Naive thymus-derived CD4-positive, alpha-beta T cell (primary cell): ENCODE measurements at regions of chr22 and their contacts with region 1.

Region 1: GRCh38 chr22:49767355-49768062 is 60.2 kb downstream of the BRD1 start:
- DNase-seq: peak in 8 of 9 donors; percentile 11 to 58 (median 46)
- ATAC-seq: peak; percentile 67
- H3K4me3 ChIP-seq: no peak overlapping the region
- H3K4me3 Mint-ChIP-seq: no peak overlapping the region
- H3K27ac ChIP-seq: no peak overlapping the region
- H3K27ac Mint-ChIP-seq: peak overlapping the region in 8 of 9 donors; percentile 3 to 74 (median 32)
- H3K4me1 ChIP-seq: no peaks in the 10 kb centered on the region
- H3K4me1 Mint-ChIP-seq: peaks cover 0 to 18% (median 6%) of the 10 kb centered on the region in 7 donors
- H3K27me3 ChIP-seq: no peaks in the 10 kb centered on the region
- H3K27me3 Mint-ChIP-seq: no peaks in the 10 kb centered on the region

Region 2: DNA sequence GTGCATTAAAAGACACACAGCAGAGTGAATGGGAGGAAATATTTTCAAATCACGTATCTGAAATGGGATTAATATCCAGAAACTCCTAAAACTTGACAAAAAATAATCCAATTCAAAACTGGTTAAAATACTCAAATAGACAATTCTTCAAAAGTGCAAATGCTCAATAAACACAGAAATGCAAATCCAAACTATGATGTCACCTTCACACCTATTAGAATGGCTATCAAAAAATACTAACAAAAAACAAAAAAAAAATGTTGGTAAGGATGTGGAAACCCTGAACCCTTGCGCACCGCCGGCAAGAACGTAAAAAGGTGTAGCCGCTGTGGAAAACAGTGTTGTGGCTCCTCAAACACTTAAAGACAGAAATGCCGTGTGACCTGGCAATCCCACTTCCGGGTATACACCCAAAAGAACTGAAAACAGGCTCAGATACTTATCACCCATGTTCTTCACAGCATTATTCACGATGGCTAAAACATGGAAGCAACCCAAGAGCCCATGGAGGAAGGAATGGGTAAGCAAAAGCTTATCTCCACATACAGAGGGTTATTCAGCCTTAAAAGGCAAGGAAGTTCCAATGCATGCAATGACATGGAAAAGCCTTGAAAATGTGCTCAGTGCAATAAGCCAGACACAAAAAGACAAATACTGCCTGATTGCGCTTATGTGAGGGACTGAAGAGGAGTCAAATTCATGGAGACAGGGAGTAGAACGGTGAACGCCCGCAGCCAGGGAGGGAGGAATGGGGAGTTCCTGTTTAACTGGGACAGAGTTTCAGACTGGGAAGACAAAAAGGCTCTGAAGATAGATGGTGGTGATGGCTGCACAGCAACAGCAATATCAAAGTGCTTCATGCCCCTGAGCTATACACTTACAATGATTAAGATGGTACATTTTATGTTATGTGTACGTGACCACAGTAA is 40.5 kb after region 1 on chr22:
- CTCF ChIA-PET with region 1: no interaction called
- POLR2A ChIA-PET with region 1: no interaction called
- intact Hi-C with region 1: loop called in 1 of 2 experiments (anchors 5 kb)
- DNase-seq: peak in 7 of 9 donors; percentile 64 to 85 (median 78)
- ATAC-seq: peak; percentile 76
- H3K4me3 ChIP-seq: no peak overlapping the region
- H3K4me3 Mint-ChIP-seq: peak overlapping the region; percentile 61 to 81 (median 68)
- H3K27ac ChIP-seq: peak overlapping the region; percentile 43
- H3K27ac Mint-ChIP-seq: peak overlapping the region; percentile 78 to 98 (median 91)
- H3K4me1 ChIP-seq: peaks cover 24 to 55% of the 10 kb centered on the region in 2 donors
- H3K4me1 Mint-ChIP-seq: peaks cover 58 to 91% (median 76%) of the 10 kb centered on the region in 7 donors
- H3K27me3 ChIP-seq: no peaks in the 10 kb centered on the region
- H3K27me3 Mint-ChIP-seq: no peaks in the 10 kb centered on the region

Region 3: DNA sequence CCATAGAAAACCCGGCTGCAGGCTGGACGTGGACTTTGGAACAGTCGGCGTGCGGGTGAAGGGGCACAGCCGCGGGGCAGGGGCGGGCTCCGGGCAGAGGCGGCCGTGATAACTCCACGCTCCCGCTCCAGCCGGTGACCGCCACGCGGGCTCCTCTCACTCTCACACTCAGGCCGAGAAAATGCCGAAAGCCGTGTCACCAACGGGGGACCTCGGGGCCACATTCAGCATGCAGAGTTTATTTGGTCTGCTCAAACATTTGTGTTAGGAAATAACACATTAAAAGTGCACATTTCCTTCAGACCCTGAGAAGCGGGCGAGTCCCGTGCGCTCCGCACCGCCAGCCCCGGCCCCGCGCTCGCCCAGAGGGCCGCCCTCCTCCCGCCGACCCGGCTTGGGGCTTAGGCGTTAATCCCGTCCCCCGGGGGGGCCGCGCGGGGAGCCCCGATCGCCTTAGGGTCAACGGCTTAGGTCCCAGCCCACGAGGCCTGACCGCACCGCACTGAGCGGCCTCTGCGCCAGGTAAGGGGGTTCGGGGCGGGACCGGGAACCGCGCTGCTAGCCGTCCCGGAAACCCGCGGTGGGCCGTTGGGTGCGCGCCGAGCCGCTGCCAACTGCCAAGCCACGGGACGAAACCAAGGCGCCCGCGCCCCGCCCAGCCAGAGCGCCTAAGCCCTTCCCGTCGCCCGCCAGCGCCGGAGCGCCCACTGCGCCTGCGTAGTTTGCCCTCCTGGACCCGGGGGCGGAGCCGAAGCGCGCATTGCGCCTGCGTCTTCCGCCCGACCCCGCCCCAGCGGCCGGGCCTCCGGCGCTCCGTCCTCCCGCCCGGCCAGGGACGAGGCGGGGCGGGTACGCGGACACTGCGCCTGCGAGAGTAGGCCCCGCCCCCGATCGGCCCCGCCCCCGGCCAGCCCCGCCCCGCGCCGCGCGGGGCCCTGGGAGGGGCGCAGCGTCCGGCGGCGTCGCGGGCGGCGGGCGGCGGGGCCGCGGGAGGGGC is 85.7 kb after region 1 on chr22 and contains the start of gene ZBED4:
- CTCF ChIA-PET with region 1: no interaction called
- POLR2A ChIA-PET with region 1: interaction called, 3 read pairs
- intact Hi-C with region 1: loop called in 1 of 2 experiments (anchors 2 kb)
- DNase-seq: peak; percentile 90 to 100 (median 98)
- ATAC-seq: peak; percentile 95
- H3K4me3 ChIP-seq: peak within 1 kb of the TSS; percentile 68
- H3K4me3 Mint-ChIP-seq: peak within 1 kb of the TSS; percentile 90 to 99 (median 96)
- H3K27ac ChIP-seq: peak within 1 kb of the TSS; percentile 90
- H3K27ac Mint-ChIP-seq: peak within 1 kb of the TSS; percentile 86 to 97 (median 93)
- H3K4me1 ChIP-seq: peaks cover 14 to 31% of the 10 kb centered on the region in 2 donors
- H3K4me1 Mint-ChIP-seq: peaks cover 30 to 62% (median 45%) of the 10 kb centered on the region in 7 donors
- H3K27me3 ChIP-seq: no peaks in the 10 kb centered on the region
- H3K27me3 Mint-ChIP-seq: peaks cover 0 to 17% (median 0%) of the 10 kb centered on the region in 5 donors
- total RNA-seq, gene ZBED4: 13.6 to 20.1 (median 17.1) TPM

Region 4: DNA sequence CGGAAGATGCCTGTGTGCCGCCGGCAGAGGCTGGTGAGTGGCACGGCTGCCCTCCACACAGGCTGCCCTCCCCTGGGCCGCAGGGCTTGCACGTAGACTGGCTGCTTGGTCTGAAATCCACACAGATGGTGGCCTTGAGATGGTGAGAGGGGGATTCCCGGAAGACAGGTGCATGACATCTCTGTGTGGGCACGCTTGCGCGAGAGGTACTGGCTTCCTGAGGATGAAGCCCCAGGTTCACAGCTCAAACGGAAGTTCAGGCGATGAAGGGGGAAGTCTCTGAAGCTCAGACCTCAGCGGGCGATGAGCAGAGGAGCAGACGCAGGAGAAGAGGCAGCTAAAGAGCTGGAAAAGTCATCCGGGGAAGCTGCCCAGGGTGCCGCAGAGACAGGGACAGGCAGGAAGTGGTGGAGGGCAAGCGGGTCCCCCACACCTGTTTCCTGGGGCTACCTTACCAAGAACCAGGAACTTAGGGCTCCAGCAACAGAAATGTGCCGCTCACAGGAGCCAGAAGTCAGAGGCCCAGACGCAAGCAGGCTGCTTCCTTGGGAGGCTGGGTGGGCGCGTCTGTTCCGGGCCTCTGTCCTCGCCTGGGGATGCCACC is 158.1 kb after region 1 on chr22:
- CTCF ChIA-PET with region 1: interaction called, 9 read pairs
- POLR2A ChIA-PET with region 1: interaction called, 4 read pairs
- intact Hi-C with region 1: loop called (anchors 1 kb)
- DNase-seq: peak; percentile 55 to 89 (median 77)
- ATAC-seq: peak; percentile 90
- H3K4me3 ChIP-seq: peak overlapping the region; percentile 56
- H3K4me3 Mint-ChIP-seq: peak overlapping the region; percentile 77 to 90 (median 84)
- H3K27ac ChIP-seq: peak overlapping the region; percentile 90
- H3K27ac Mint-ChIP-seq: peak overlapping the region; percentile 92 to 98 (median 97)
- H3K4me1 ChIP-seq: peaks cover 14 to 26% of the 10 kb centered on the region in 2 donors
- H3K4me1 Mint-ChIP-seq: peaks cover 21 to 38% (median 32%) of the 10 kb centered on the region in 7 donors
- H3K27me3 ChIP-seq: no peaks in the 10 kb centered on the region
- H3K27me3 Mint-ChIP-seq: no peaks in the 10 kb centered on the region

Region 5: DNA sequence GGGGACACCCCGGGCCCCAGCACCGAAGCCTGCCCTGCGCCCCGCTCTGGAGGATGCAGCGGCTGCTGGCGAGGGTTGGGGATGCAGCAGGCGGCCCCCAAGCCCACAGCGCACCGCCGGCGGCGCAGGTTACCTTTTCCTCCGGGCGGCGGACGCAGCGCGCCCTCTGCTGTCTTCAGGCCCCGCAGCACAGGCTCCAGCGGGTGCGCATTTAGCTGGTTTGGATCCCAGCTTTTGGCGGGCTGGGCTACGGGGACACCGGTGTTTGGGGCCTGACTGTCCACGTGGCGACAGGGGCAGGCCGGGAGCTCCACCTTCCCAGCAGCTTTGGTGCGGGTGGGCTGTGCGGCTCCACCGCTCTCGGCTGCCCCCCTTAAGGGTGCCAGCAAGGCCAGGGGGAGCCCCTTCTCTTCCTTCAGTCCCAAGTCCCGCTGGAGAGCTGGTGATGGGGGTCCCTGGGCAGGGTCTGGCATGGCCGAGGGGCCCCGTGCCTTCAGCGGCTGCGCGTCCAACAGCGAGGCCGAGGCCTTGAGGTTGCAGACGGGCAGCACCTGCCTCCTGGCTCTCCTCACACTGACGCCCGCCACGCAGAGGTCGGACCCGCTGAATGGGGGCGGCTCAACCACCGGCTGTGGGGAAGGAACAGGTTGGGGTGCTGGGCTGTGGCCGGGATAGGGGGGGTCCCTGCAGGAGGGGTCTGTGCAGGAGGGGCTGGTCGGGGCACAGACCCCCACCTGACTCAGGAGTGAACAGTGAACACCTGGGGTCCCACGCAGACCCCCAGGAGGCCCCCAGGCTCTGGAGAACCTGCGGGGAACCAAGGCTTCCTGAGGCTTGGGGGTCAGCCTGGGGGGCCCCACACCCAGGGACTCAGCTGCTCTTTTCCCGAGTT is 263.0 kb after region 1 on chr22:
- CTCF ChIA-PET with region 1: interaction called, 13 read pairs
- POLR2A ChIA-PET with region 1: no interaction called
- intact Hi-C with region 1: loop called (anchors 1 kb)
- DNase-seq: peak; percentile 65 to 84 (median 80)
- ATAC-seq: peak; percentile 95
- H3K4me3 ChIP-seq: no peak overlapping the region
- H3K4me3 Mint-ChIP-seq: peak overlapping the region in 1 of 10 donors; percentile 34
- H3K27ac ChIP-seq: no peak overlapping the region
- H3K27ac Mint-ChIP-seq: no peak overlapping the region
- H3K4me1 ChIP-seq: peaks cover 2 to 9% of the 10 kb centered on the region in 2 donors
- H3K4me1 Mint-ChIP-seq: peaks cover 0 to 12% (median 5%) of the 10 kb centered on the region in 7 donors
- H3K27me3 ChIP-seq: no peaks in the 10 kb centered on the region
- H3K27me3 Mint-ChIP-seq: peaks cover 0 to 27% (median 6%) of the 10 kb centered on the region in 5 donors

Region 6: GRCh38 chr22:50044485-50045118 is 277.1 kb after region 1 on chr22:
- CTCF ChIA-PET with region 1: no interaction called
- POLR2A ChIA-PET with region 1: no interaction called
- intact Hi-C with region 1: no loop called
- DNase-seq: no peak
- ATAC-seq: no peak
- H3K4me3 ChIP-seq: no peak overlapping the region
- H3K4me3 Mint-ChIP-seq: no peak overlapping the region
- H3K27ac ChIP-seq: no peak overlapping the region
- H3K27ac Mint-ChIP-seq: no peak overlapping the region
- H3K4me1 ChIP-seq: no peaks in the 10 kb centered on the region
- H3K4me1 Mint-ChIP-seq: peaks cover 0 to 16% (median 11%) of the 10 kb centered on the region in 7 donors
- H3K27me3 ChIP-seq: no peaks in the 10 kb centered on the region
- H3K27me3 Mint-ChIP-seq: peaks cover 13 to 23% (median 20%) of the 10 kb centered on the region in 5 donors

Region 7: DNA sequence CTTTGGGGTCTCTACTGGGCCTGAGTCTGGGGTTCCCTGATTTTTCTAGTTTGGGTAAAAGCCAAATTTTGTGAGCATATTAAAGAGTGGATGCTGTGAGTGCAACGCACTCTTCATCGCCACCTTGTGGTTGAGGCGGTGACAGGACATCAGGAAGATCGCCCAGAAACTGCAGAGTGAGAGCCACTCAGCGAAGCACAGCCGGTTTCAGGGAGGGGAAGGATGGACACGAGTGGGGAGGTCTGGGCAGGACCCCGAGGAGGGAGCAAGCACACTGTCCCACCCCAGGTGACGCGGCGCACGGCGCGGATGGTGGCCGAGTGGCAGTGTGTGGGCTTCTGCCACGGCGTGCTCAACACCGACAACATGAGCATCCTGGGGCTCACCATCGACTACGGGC is 442.4 kb after region 1 on chr22:
- CTCF ChIA-PET with region 1: no interaction called
- POLR2A ChIA-PET with region 1: no interaction called
- intact Hi-C with region 1: loop called in 1 of 2 experiments (anchors 5 kb)
- DNase-seq: peak; percentile 50 to 78 (median 68)
- ATAC-seq: peak; percentile 83
- H3K4me3 ChIP-seq: no peak overlapping the region
- H3K4me3 Mint-ChIP-seq: peak overlapping the region in 1 of 10 donors; percentile 25
- H3K27ac ChIP-seq: no peak overlapping the region
- H3K27ac Mint-ChIP-seq: peak overlapping the region in 8 of 9 donors; percentile 58 to 96 (median 82)
- H3K4me1 ChIP-seq: no peaks in the 10 kb centered on the region
- H3K4me1 Mint-ChIP-seq: peaks cover 12 to 39% (median 32%) of the 10 kb centered on the region in 7 donors
- H3K27me3 ChIP-seq: no peaks in the 10 kb centered on the region
- H3K27me3 Mint-ChIP-seq: no peaks in the 10 kb centered on the region